HepG2 (cell line): ENCODE measurements at regions of chr6 and their contacts with region 1.

Region 1: DNA sequence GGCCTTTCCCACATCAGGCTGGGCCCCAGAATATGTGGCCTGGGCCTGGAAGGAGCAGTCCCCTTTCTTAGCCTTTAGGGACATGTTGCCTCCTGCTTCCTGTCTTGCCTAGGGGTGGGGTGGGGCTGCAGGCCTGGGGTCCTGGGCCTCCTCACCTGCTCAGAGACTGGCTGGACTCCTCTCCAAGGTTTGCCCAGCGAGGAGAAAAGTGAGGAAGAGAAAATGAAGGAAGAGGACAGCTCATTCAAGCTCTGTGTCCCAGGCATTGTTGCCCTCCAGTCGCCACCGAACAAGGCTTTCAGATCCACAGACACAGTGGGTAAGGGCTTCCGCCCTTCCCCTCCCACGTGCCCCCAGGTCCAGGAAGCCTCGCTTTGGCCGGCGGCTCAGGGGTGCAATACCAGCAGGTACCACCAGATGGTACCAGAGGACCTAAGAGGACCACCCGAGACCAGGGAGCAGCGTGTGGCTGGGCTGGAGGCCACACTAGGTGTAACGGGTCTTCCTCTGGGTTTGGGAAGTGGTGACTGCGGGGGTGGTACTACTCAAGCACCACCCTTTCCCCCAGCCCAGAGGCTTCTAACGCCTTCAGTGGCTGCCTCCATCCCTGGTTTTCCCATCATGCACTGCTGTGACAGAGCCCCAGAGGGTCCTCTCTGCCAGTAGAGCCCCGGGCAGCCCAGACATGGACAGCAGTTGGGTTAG is 5.5 kb upstream of the BAK1 start:
- DNase-seq: peak; percentile 72
- ATAC-seq: peak; percentile 29
- H3K4me3 ChIP-seq: peak overlapping the region in 1 of 3 experiments; percentile 36; a peak in 1 of 6 replicates
- H3K27ac ChIP-seq: no peak overlapping the region
- H3K4me1 ChIP-seq: peaks cover 53% of the 10 kb centered on the region
- H3K27me3 ChIP-seq: 0 out of 5 replicates have a peak, but pooled peaks cover 0 to 3% of the 10 kb centered on the region in 2 experiments
- CTCF ChIP-seq: peak; percentile 100
- EP300 ChIP-seq: no peak
- POLR2A ChIP-seq: no peak
- RAD21 ChIP-seq: peak; percentile 97

Region 2: DNA sequence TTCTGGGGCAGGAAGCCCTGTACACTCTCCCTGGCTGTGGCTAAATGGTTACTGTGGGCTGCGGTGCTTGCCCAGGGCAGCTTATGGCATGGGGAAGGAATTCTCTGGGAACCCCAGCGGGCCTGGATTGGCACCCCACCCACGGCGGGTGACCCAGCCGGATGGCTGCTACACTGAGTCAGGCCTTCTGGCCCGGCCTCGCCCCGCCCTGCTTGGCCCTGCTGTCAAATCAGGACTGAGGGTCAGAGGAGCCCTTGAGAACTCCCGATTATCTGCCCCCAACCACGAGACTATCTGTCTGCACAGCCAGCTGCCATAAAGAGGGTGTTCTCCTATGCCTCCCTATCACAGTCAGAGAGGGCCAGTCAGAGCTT is 28.2 kb after region 1 on chr6:
- CTCF ChIA-PET with region 1: interaction called, 24 read pairs
- POLR2A ChIA-PET with region 1: interaction called, 37 read pairs
- in situ Hi-C with region 1: no loop called
- intact Hi-C with region 1: loop called (anchors 1 kb)
- DNase-seq: no peak
- ATAC-seq: peak; percentile 24
- H3K4me3 ChIP-seq: peak overlapping the region in 1 of 3 experiments; percentile 29; a peak in 2 of 6 replicates
- H3K27ac ChIP-seq: peak overlapping the region; percentile 32
- H3K4me1 ChIP-seq: peaks cover 61% of the 10 kb centered on the region
- H3K27me3 ChIP-seq: no peaks in the 10 kb centered on the region; a peak in 1 of 5 replicates
- CTCF ChIP-seq: no peak
- EP300 ChIP-seq: no peak
- POLR2A ChIP-seq: no peak
- RAD21 ChIP-seq: no peak

Region 3: DNA sequence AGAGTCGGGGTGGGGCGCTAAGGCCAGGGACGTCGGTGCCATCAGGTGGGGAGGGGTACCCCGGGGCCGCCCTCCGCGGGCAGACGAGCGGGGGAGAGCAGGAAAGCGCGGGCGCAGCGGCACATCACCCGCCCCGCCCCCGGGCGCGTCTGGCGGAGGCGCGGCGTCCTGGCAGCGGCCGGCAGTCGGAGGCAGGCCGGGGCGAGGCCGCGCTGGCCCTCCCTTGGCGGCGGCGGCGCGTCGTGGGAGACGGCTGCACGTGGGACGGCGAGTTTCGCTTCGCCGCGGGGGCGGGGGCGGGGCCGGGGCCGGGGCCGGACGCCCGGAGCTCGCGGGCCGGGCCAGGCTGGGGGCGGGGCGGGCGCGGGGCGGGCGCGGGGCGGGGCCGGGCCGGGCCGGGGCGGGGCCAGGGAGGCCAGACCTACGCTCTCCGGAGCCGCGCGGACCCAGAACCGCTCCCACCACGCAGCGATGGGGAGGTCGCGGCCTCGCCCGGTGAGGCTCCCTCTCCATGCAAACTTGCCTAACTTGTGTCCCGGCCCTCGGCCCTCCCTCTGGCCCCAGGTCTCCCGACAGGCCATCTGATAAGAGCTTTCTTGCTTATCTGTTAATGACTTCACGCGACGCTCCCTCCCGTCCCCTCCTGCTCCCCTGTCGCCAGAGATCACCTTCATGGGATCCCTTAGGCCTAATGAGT is 48.1 kb after region 1 on chr6:
- CTCF ChIA-PET with region 1: interaction called, 72 read pairs
- POLR2A ChIA-PET with region 1: interaction called, 23 read pairs
- in situ Hi-C with region 1: no loop called
- intact Hi-C with region 1: loop called (anchors 1 kb)
- DNase-seq: no peak
- ATAC-seq: peak; percentile 81
- H3K4me3 ChIP-seq: peak overlapping the region; percentile 58 to 84 (median 60)
- H3K27ac ChIP-seq: no peak overlapping the region
- H3K4me1 ChIP-seq: peaks cover 34% of the 10 kb centered on the region
- H3K27me3 ChIP-seq: no peaks in the 10 kb centered on the region
- CTCF ChIP-seq: no peak
- EP300 ChIP-seq: no peak
- POLR2A ChIP-seq: peak in 1 of 2 experiments; percentile 59; a peak in 2 of 4 replicates
- RAD21 ChIP-seq: no peak

Region 4: GRCh38 chr6:33700391-33701050 is 115.0 kb after region 1 on chr6:
- CTCF ChIA-PET with region 1: interaction called, 19 read pairs
- POLR2A ChIA-PET with region 1: interaction called, 8 read pairs
- in situ Hi-C with region 1: loop called (anchors 5 kb)
- intact Hi-C with region 1: loop called (anchors 1 kb)
- DNase-seq: peak; percentile 58
- ATAC-seq: peak; percentile 68
- H3K4me3 ChIP-seq: no peak overlapping the region
- H3K27ac ChIP-seq: no peak overlapping the region
- H3K4me1 ChIP-seq: peaks cover 11% of the 10 kb centered on the region; the same call in 1 of the 2 replicates
- H3K27me3 ChIP-seq: no peaks in the 10 kb centered on the region
- CTCF ChIP-seq: peak; percentile 87
- EP300 ChIP-seq: no peak
- POLR2A ChIP-seq: no peak
- RAD21 ChIP-seq: 0 out of 2 replicates have a peak, but pooled peaks have one; percentile 19

Region 5: GRCh38 chr6:33761922-33762629 is 176.5 kb after region 1 on chr6:
- CTCF ChIA-PET with region 1: interaction called, 5 read pairs
- POLR2A ChIA-PET with region 1: interaction called, 14 read pairs
- in situ Hi-C with region 1: loop called (anchors 5 kb)
- intact Hi-C with region 1: loop called (anchors 1 kb)
- DNase-seq: peak; percentile 87
- ATAC-seq: peak; percentile 92
- H3K4me3 ChIP-seq: peak overlapping the region in 1 of 3 experiments; percentile 41; a peak in 1 of 6 replicates
- H3K27ac ChIP-seq: peak overlapping the region; percentile 39
- H3K4me1 ChIP-seq: peaks cover 36% of the 10 kb centered on the region
- H3K27me3 ChIP-seq: peaks cover 7% of the 10 kb centered on the region in 2 experiments; a peak in 3 of 5 replicates
- CTCF ChIP-seq: peak; percentile 100
- EP300 ChIP-seq: peak in 1 of 2 experiments; percentile 72; a peak in 2 of 4 replicates
- POLR2A ChIP-seq: no peak; a peak in 1 of 4 replicates
- RAD21 ChIP-seq: peak; percentile 99